ENCODE measurements at regions of chr6 and their contacts with region 1.

Region 1: GRCh38 chr6:127302728-127303660 is 36.3 kb downstream of the RNF146 start:
- DNase-seq: no peak
- H3K4me3 ChIP-seq: no peak overlapping the region
- H3K27ac ChIP-seq: peak overlapping the region in 1 of 4 donors; percentile 2
- H3K4me1 ChIP-seq: peaks cover 0 to 33% (median 0%) of the 10 kb centered on the region in 3 donors
- H3K27me3 ChIP-seq: no peaks in the 10 kb centered on the region
- CTCF ChIP-seq: peak; percentile 34 to 83 (median 74)
- POLR2A ChIP-seq: no peak

Region 2: GRCh38 chr6:127420556-127420955 is 117.6 kb after region 1 on chr6:
- intact Hi-C with region 1: loop called (anchors 5 kb)
- DNase-seq: peak; percentile 27
- H3K4me3 ChIP-seq: no peak overlapping the region
- H3K27ac ChIP-seq: peak overlapping the region in 2 of 4 donors; percentile 1 to 40
- H3K4me1 ChIP-seq: peaks cover 0 to 7% (median 3%) of the 10 kb centered on the region in 3 donors
- H3K27me3 ChIP-seq: no peaks in the 10 kb centered on the region
- CTCF ChIP-seq: peak in 5 of 6 experiments; percentile 17 to 50 (median 38)
- POLR2A ChIP-seq: no peak

Region 3: DNA sequence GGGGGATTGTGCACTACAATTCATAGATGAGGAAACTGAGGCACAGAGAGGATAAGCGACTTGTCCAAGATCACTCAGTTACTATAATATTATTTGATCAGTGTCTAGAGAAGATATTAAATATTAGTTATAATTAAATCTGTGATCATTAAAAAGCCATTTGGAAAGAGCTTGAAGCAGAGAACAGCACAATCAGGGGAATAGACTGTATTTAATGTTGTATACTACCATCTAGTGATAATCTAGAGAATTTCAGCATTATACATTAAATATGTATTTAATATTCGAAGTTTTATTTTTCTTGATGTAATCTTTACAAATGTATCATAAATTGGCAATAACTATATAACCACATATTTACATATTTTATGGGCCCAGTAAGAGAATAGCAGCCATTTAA is 236.3 kb after region 1 on chr6:
- intact Hi-C with region 1: loop called (anchors 10 kb)
- DNase-seq: no peak
- H3K4me3 ChIP-seq: no peak overlapping the region
- H3K27ac ChIP-seq: no peak overlapping the region
- H3K4me1 ChIP-seq: no peaks in the 10 kb centered on the region
- H3K27me3 ChIP-seq: peaks cover 0 to 4% (median 0%) of the 10 kb centered on the region in 4 donors
- CTCF ChIP-seq: peak in 4 of 6 experiments; percentile 25 to 53 (median 40)
- POLR2A ChIP-seq: no peak

Region 4: DNA sequence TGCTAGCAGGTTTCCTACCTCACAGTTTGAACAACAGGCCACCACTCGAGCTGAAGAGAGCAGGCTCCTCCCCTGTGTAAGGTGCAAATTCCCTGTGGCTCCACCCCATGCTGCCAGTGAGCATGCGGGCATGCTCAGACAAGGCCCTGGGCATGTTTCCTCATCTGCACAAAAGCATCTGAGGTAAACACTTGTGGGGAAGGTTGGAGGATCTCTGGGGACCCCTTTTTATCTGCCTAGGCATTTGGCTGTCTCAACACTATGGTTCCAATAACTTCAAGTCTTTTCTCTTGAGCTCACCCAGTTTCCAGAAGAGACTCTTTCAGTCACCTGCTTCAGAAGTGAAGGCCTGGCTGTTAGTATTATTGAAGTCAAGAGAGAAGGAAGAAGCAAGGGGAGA is 283.4 kb after region 1 on chr6:
- intact Hi-C with region 1: no loop called
- DNase-seq: no peak
- H3K4me3 ChIP-seq: no peak overlapping the region
- H3K27ac ChIP-seq: no peak overlapping the region
- H3K4me1 ChIP-seq: peaks cover 0 to 13% (median 0%) of the 10 kb centered on the region in 3 donors
- H3K27me3 ChIP-seq: no peaks in the 10 kb centered on the region
- CTCF ChIP-seq: no peak
- POLR2A ChIP-seq: no peak